A673 (cell line): ENCODE measurements at regions of chr1 and their contacts with region 1.

Region 1: DNA sequence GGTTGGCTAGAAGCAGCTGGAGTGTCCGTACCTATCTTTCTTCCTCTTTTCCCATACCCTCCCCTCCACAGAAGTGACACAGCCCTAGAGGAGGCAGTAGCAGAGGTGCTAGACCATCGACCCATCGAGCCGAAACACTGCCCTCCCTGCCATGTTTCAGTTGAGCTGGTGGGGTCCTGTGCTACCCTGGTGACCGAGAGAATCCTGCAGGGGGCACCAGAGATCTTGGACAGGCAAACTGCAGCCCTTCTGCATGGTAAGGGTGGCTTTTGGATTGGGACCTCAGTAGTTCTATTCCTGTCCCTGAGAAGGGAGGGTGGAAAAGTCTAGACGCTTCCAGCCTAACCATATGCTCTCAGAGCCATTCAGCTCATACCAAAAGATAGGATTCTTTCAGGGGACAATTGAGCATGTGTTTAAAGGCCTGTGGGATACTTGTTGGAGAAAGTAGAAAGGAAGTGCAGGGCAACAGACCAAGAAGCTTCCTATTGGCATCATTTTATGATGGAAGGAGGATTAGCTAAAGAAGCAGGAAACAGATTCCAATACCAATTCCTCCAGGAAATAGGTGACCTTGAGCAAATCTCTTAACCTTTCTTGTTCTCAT is 11.7 kb upstream of the BNIPL start:
- DNase-seq: peak; percentile 84
- H3K4me3 ChIP-seq: no peak overlapping the region
- H3K27ac ChIP-seq: no peak overlapping the region
- H3K4me1 ChIP-seq: peaks cover 6% of the 10 kb centered on the region
- H3K27me3 ChIP-seq: no peaks in the 10 kb centered on the region
- CTCF ChIP-seq: peak; percentile 88

Region 2: DNA sequence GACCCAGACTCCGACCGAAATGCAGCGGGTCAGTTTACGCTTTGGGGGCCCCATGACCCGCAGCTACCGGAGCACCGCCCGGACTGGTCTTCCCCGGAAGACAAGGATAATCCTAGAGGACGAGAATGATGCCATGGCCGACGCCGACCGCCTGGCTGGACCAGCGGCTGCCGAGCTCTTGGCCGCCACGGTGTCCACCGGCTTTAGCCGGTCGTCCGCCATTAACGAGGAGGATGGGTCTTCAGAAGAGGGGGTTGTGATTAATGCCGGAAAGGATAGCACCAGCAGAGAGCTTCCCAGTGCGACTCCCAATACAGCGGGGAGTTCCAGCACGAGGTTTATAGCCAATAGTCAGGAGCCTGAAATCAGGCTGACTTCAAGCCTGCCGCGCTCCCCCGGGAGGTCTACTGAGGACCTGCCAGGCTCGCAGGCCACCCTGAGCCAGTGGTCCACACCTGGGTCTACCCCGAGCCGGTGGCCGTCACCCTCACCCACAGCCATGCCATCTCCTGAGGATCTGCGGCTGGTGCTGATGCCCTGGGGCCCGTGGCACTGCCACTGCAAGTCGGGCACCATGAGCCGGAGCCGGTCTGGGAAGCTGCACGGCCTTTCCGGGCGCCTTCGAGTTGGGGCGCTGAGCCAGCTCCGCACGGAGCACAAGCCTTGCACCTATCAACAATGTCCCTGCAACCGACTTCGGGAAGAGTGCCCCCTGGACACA is 23.4 kb after region 1 on chr1:
- CTCF ChIA-PET with region 1: interaction called, 13 read pairs
- POLR2A ChIA-PET with region 1: no interaction called
- intact Hi-C with region 1: no loop called
- DNase-seq: peak; percentile 79
- H3K4me3 ChIP-seq: peak overlapping the region; percentile 70
- H3K27ac ChIP-seq: peak overlapping the region; percentile 64
- H3K4me1 ChIP-seq: peaks cover 4% of the 10 kb centered on the region
- H3K27me3 ChIP-seq: no peaks in the 10 kb centered on the region
- CTCF ChIP-seq: peak; percentile 65

Region 3: DNA sequence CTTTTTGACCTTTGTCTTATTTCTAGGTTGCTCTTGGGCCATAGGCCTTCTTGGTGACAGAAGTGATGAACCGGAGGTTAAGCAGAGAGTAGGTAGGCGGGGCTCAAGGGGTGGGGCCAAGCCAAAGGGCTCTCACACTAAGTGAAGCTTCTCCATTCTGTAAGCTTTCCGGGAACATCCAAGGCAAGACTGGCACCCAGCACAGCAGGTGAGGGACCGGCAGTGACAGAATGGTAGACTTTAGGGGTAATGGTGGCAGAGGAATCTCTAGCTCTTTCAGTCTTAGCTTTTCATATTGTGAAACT is 131.8 kb after region 1 on chr1 and contains the start of gene TNFAIP8L2:
- CTCF ChIA-PET with region 1: no interaction called
- POLR2A ChIA-PET with region 1: no interaction called
- intact Hi-C with region 1: loop called (anchors 10 kb)
- DNase-seq: no peak
- H3K4me3 ChIP-seq: no peak within 1 kb of the TSS
- H3K27ac ChIP-seq: no peak within 1 kb of the TSS
- H3K4me1 ChIP-seq: no peaks in the 10 kb centered on the region
- H3K27me3 ChIP-seq: no peaks in the 10 kb centered on the region
- CTCF ChIP-seq: no peak
- total RNA-seq, gene TNFAIP8L2: not detected in 2 replicates

Region 4: GRCh38 chr1:152907686-152908601 is 1883.3 kb after region 1 on chr1 and contains the start of gene IVL:
- CTCF ChIA-PET with region 1: no interaction called
- POLR2A ChIA-PET with region 1: no interaction called
- intact Hi-C with region 1: no loop called
- DNase-seq: peak; percentile 0
- H3K4me3 ChIP-seq: no peak within 1 kb of the TSS
- H3K27ac ChIP-seq: no peak within 1 kb of the TSS
- H3K4me1 ChIP-seq: no peaks in the 10 kb centered on the region
- H3K27me3 ChIP-seq: peaks cover 44% of the 10 kb centered on the region
- CTCF ChIP-seq: no peak
- total RNA-seq, gene IVL: not detected in 2 replicates